RWPE1 (cell line): ENCODE measurements at regions of chr10 and their contacts with region 1.

Region 1: GRCh38 chr10:25113191-25114035 is 61.4 kb upstream of the GPR158 start:
- DNase-seq: peak; percentile 54
- H3K27ac ChIP-seq: no peak overlapping the region
- CTCF ChIP-seq: peak; percentile 83

Region 2: GRCh38 chr10:25094590-25094989 is 18.8 kb before region 1 on chr10:
- CTCF ChIA-PET with region 1: no interaction called
- POLR2A ChIA-PET with region 1: no interaction called
- DNase-seq: no peak
- H3K27ac ChIP-seq: no peak overlapping the region
- CTCF ChIP-seq: no peak

Region 3: DNA sequence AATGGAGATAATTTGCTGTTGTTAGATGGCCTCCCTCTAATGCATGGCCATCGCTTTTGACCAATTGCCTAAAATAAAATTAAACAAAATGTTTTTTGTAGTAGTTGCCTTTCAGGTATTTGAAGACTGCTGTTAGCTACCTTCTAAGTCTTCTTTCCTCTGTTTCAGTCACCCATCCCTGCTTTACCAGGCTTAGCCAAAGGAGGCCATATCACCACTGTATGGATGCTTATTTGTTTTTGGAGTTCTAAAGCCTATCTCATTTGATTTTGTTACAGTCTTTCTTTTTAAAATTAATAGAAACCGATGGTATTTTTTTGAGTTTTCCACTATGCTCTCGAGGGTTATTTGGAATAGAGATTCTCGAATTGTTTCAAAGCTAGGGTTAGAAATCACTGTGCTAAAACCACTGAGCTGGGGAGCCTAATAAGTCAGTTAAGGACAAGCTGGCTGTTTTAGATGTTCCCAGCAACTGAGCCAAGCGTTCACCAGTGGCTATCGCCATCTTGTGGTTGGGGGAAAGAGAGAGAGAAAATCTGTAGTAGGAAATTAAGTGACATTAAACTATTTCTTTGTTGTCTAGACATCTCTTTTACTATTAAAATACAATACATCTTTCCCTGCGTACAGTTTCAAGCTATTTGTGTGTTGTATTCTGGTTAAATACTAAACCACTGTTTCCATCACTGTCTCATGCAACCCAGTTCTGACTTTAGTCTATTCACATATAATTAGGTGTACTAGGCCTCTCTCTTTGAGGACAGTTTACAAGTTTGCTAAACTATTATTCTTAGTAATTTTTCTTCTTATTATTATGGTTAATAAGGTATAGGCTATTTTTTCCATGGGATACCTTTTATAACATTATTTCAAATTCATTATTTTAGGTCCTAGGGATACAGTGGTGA is 113.6 kb after region 1 on chr10:
- CTCF ChIA-PET with region 1: interaction called, 17 read pairs
- POLR2A ChIA-PET with region 1: no interaction called
- DNase-seq: peak; percentile 19
- H3K27ac ChIP-seq: no peak overlapping the region
- CTCF ChIP-seq: peak; percentile 74

Region 4: GRCh38 chr10:25304606-25305005 is 191.2 kb after region 1 on chr10:
- CTCF ChIA-PET with region 1: no interaction called
- POLR2A ChIA-PET with region 1: no interaction called
- DNase-seq: no peak
- H3K27ac ChIP-seq: no peak overlapping the region
- CTCF ChIP-seq: no peak